ENCODE measurements at regions of chr11 and their contacts with region 1.

Region 1: GRCh38 chr11:67468835-67469811 is at the start of gene TMEM134:
- DNase-seq: peak; percentile 92
- ATAC-seq: peak; percentile 75
- H3K4me3 ChIP-seq: peak within 1 kb of the TSS; percentile 61 to 96 (median 91)
- H3K4me3 Mint-ChIP-seq: peak within 1 kb of the TSS; percentile 95
- H3K27ac ChIP-seq: peak within 1 kb of the TSS; percentile 78 to 87
- H3K27ac Mint-ChIP-seq: peak within 1 kb of the TSS; percentile 95
- H3K4me1 ChIP-seq: peaks cover 31 to 55% of the 10 kb centered on the region in 2 donors
- H3K4me1 Mint-ChIP-seq: peaks cover 49% of the 10 kb centered on the region
- H3K27me3 ChIP-seq: no peaks in the 10 kb centered on the region
- H3K27me3 Mint-ChIP-seq: no peaks in the 10 kb centered on the region
- CTCF ChIP-seq: peak; percentile 63
- total RNA-seq, gene TMEM134: 154 and 167 TPM in 2 replicates

Region 2: DNA sequence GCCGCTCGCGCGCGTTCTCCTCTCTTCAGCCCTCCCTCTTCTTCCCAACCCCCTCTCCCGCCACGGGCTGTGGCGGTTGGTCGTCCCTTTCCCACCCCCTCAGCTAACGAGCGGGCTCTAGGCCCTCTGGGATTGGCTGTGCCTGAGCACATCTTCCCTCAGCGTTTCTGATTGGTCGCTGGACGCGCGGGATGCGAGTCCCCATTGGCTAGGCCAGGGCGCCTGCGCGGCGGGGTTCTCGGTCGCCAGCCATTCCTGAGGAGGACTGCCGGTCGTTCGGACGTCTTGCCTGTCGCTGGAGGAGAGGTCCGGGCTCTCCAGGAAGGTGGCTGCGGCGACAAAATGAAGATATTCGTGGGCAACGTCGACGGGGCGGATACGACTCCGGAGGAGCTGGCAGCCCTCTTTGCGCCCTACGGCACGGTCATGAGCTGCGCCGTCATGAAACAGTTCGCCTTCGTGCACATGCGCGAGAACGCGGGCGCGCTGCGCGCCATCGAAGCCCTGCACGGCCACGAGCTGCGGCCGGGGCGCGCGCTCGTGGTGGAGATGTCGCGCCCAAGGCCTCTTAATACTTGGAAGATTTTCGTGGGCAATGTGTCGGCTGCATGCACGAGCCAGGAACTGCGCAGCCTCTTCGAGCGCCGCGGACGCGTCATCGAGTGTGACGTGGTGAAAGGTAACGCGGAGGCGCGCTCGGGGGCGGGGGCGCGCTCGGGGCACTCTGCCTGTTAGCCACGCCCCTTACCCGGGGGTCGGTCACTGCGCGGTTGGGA is 852.6 kb before region 1 on chr11 and contains the start of gene RBM14:
- CTCF ChIA-PET with region 1: no interaction called
- POLR2A ChIA-PET with region 1: interaction called, 10 read pairs
- intact Hi-C with region 1: no loop called
- DNase-seq: peak; percentile 99
- ATAC-seq: peak; percentile 89
- H3K4me3 ChIP-seq: peak within 1 kb of the TSS; percentile 75 to 97 (median 94)
- H3K4me3 Mint-ChIP-seq: peak within 1 kb of the TSS; percentile 99
- H3K27ac ChIP-seq: peak within 1 kb of the TSS; percentile 85 to 90
- H3K27ac Mint-ChIP-seq: peak within 1 kb of the TSS; percentile 99
- H3K4me1 ChIP-seq: peaks cover 53 to 65% of the 10 kb centered on the region in 2 donors
- H3K4me1 Mint-ChIP-seq: peaks cover 59% of the 10 kb centered on the region
- H3K27me3 ChIP-seq: no peaks in the 10 kb centered on the region
- H3K27me3 Mint-ChIP-seq: no peaks in the 10 kb centered on the region
- CTCF ChIP-seq: no peak
- total RNA-seq, gene RBM14: 244 and 246 TPM in 2 replicates

Region 3: GRCh38 chr11:67391304-67392132 is 77.6 kb before region 1 on chr11 and contains the start of gene RAD9A:
- CTCF ChIA-PET with region 1: interaction called, 5 read pairs
- POLR2A ChIA-PET with region 1: interaction called, 3 read pairs
- intact Hi-C with region 1: loop called (anchors 1 kb)
- DNase-seq: peak; percentile 96
- ATAC-seq: peak; percentile 83
- H3K4me3 ChIP-seq: peak within 1 kb of the TSS; percentile 63 to 95 (median 81)
- H3K4me3 Mint-ChIP-seq: peak within 1 kb of the TSS; percentile 91
- H3K27ac ChIP-seq: peak within 1 kb of the TSS; percentile 33 to 78
- H3K27ac Mint-ChIP-seq: peak within 1 kb of the TSS; percentile 69
- H3K4me1 ChIP-seq: peaks cover 10 to 29% of the 10 kb centered on the region in 2 donors
- H3K4me1 Mint-ChIP-seq: peaks cover 36% of the 10 kb centered on the region
- H3K27me3 ChIP-seq: no peaks in the 10 kb centered on the region
- H3K27me3 Mint-ChIP-seq: no peaks in the 10 kb centered on the region
- CTCF ChIP-seq: no peak
- total RNA-seq, gene RAD9A: 48.3 and 50.6 TPM in 2 replicates

Region 4: DNA sequence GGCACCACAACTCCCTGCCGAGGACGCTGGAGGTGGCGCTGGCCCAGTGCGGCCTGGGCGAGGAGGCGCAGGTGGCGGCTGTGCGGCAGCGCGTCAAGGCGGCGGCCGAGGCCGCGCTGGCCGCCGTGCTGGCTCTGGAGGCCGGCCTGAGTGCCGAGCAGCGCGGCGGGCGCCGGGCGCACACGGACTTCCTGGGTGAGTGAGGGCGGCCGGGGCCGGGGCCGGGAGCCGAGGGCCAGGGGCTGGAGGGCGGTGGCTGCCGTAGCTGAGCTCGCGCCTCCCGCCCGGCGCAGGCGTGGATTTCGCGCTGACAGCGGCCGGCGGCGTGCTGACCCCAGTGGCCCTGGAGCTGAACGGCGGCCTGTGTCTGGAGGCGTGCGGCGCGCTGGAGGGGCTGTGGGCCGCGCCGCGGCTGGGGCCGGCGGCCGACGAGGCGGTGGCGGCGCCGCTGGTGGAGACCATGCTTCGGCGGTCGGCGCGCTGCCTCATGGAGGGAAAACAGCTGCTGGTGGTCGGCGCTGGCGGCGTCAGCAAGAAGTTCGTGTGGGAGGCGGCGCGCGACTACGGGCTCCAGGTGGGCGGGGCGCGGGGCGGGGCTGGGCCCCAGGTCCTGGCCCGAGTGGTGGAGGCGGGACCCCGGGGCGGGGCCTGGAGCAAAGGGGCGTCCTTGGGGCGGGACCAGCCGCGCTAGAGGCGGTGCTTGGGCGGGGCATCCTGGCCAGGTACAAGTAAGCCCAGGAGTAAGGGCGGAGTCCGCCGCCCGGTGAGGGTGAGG is 48.3 kb before region 1 on chr11:
- CTCF ChIA-PET with region 1: interaction called, 6 read pairs
- POLR2A ChIA-PET with region 1: interaction called, 41 read pairs
- intact Hi-C with region 1: loop called (anchors 1 kb)
- DNase-seq: peak; percentile 98
- ATAC-seq: peak; percentile 85
- H3K4me3 ChIP-seq: peak overlapping the region in 4 of 5 experiments; percentile 32 to 63 (median 53)
- H3K4me3 Mint-ChIP-seq: peak overlapping the region; percentile 83
- H3K27ac ChIP-seq: peak overlapping the region; percentile 43 to 71
- H3K27ac Mint-ChIP-seq: peak overlapping the region; percentile 91
- H3K4me1 ChIP-seq: peaks cover 49 to 54% of the 10 kb centered on the region in 2 donors
- H3K4me1 Mint-ChIP-seq: peaks cover 50% of the 10 kb centered on the region
- H3K27me3 ChIP-seq: no peaks in the 10 kb centered on the region
- H3K27me3 Mint-ChIP-seq: no peaks in the 10 kb centered on the region
- CTCF ChIP-seq: no peak

Region 5: GRCh38 chr11:67456068-67456705 is 12.9 kb before region 1 on chr11:
- CTCF ChIA-PET with region 1: interaction called, 20 read pairs
- POLR2A ChIA-PET with region 1: interaction called, 16 read pairs
- intact Hi-C with region 1: no loop called
- DNase-seq: no peak
- ATAC-seq: no peak
- H3K4me3 ChIP-seq: no peak overlapping the region
- H3K4me3 Mint-ChIP-seq: no peak overlapping the region
- H3K27ac ChIP-seq: no peak overlapping the region
- H3K27ac Mint-ChIP-seq: peak overlapping the region; percentile 92
- H3K4me1 ChIP-seq: peaks cover 48 to 88% of the 10 kb centered on the region in 2 donors
- H3K4me1 Mint-ChIP-seq: peaks cover 44% of the 10 kb centered on the region
- H3K27me3 ChIP-seq: no peaks in the 10 kb centered on the region
- H3K27me3 Mint-ChIP-seq: no peaks in the 10 kb centered on the region
- CTCF ChIP-seq: no peak

Region 6: DNA sequence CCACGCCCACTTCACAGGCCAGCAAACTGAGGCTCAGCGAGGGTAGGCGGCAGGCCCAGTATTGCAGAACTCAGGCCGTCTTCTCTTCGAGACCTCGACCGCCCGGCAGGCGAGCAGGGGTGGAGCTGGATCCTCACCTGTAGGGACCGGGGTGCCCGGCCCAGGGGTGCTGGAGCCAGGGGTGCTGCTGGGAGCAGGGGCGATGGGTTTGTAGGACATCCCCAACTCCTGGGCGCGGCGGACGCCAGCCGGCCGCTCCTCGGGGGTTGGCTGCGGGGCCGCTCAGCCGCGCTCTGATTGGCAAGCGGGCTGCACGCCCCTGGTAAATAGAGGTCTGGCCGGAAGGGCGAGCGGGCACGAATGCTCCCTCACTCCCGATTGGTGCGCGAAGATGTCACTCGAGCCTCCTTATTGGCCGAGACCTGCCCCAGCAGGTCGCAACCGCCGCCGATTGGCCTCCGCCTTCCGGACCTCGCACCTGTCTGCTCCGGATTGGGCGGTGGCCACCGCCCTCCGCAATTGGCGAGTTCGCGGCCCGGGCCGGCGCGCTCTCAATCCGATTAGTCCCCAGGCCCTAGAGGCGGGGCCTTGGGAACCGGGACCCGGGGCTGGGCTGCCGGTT is 38.9 kb after region 1 on chr11 and contains the start of gene CDK2AP2:
- CTCF ChIA-PET with region 1: interaction called, 14 read pairs
- POLR2A ChIA-PET with region 1: interaction called, 4 read pairs
- intact Hi-C with region 1: loop called (anchors 1 kb)
- DNase-seq: peak; percentile 100
- ATAC-seq: peak; percentile 74
- H3K4me3 ChIP-seq: peak within 1 kb of the TSS; percentile 57 to 88 (median 79)
- H3K4me3 Mint-ChIP-seq: peak within 1 kb of the TSS; percentile 92
- H3K27ac ChIP-seq: peak within 1 kb of the TSS; percentile 84 to 98
- H3K27ac Mint-ChIP-seq: peak within 1 kb of the TSS; percentile 95
- H3K4me1 ChIP-seq: peaks cover 39 to 46% of the 10 kb centered on the region in 2 donors
- H3K4me1 Mint-ChIP-seq: peaks cover 42% of the 10 kb centered on the region
- H3K27me3 ChIP-seq: peaks cover 0 to 16% (median 4%) of the 10 kb centered on the region in 4 experiments
- H3K27me3 Mint-ChIP-seq: peaks cover 8% of the 10 kb centered on the region
- CTCF ChIP-seq: no peak
- total RNA-seq, gene CDK2AP2: 50.3 and 62.7 TPM in 2 replicates

Measured in B cell (primary cell).